ENCODE measurements at regions of chr9 and their contacts with region 1.

Region 1: DNA sequence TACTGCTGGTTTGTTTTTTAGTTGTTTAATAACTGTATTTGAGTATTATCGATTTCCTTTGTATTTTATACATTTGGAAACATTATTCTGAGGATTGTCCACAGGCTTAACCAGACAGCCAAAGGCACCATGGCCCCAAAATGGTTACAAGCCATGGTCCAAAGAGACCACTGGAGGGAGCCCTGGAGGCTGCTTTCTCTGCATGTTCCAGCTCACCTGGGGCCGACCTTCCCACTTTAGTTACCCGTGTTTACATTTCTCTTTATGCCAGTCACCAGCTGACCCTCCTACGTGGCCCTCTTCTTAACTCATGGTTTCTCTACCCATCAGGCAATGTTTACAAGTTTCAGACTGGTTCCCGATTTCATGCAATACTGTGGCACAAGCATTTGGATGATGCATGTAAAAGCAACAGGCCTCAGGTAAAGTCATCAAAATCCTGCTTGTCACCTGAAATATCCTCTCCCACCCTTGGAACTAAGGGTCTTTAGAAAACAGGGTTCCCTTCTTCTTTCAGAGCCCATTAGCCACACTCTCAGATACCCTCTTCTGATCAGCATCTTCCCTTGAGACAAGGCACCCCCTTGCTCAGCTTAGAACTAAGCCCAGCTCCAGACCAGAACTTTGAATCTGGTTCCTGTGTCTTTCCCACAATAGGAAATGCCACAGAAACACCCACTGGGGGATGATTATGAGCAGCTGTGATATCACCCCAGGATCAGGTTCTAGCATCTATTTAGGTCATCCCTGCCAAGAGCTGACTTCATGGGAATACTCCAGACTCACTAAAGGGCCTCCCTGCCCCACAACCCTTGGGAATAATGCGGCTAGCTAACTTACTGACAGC is 49.9 kb upstream of the GARNL3 start:
- DNase-seq: peak; percentile 40 to 78 (median 54)
- ATAC-seq: peak; percentile 92
- H3K4me3 ChIP-seq: no peak overlapping the region
- H3K4me3 Mint-ChIP-seq: no peak overlapping the region
- H3K27ac ChIP-seq: no peak overlapping the region
- H3K27ac Mint-ChIP-seq: no peak overlapping the region
- H3K4me1 ChIP-seq: no peaks in the 10 kb centered on the region
- H3K4me1 Mint-ChIP-seq: peaks cover 5% of the 10 kb centered on the region
- H3K27me3 ChIP-seq: no peaks in the 10 kb centered on the region
- H3K27me3 Mint-ChIP-seq: peaks cover 16% of the 10 kb centered on the region
- CTCF ChIP-seq: peak; percentile 83

Region 2: GRCh38 chr9:127049044-127049443 is 165.6 kb before region 1 on chr9:
- CTCF ChIA-PET with region 1: no interaction called
- POLR2A ChIA-PET with region 1: no interaction called
- intact Hi-C with region 1: no loop called
- DNase-seq: peak in 7 of 14 experiments; percentile 7 to 74 (median 44)
- ATAC-seq: peak; percentile 73
- H3K4me3 ChIP-seq: peak overlapping the region; percentile 0
- H3K4me3 Mint-ChIP-seq: peak overlapping the region; percentile 15
- H3K27ac ChIP-seq: no peak overlapping the region
- H3K27ac Mint-ChIP-seq: no peak overlapping the region
- H3K4me1 ChIP-seq: peaks cover 21% of the 10 kb centered on the region
- H3K4me1 Mint-ChIP-seq: peaks cover 24% of the 10 kb centered on the region
- H3K27me3 ChIP-seq: no peaks in the 10 kb centered on the region
- H3K27me3 Mint-ChIP-seq: no peaks in the 10 kb centered on the region
- CTCF ChIP-seq: peak; percentile 4

Region 3: GRCh38 chr9:127074561-127075548 is 139.8 kb before region 1 on chr9:
- CTCF ChIA-PET with region 1: no interaction called
- POLR2A ChIA-PET with region 1: no interaction called
- intact Hi-C with region 1: no loop called
- DNase-seq: no peak
- ATAC-seq: no peak
- H3K4me3 ChIP-seq: no peak overlapping the region
- H3K4me3 Mint-ChIP-seq: no peak overlapping the region
- H3K27ac ChIP-seq: no peak overlapping the region
- H3K27ac Mint-ChIP-seq: no peak overlapping the region
- H3K4me1 ChIP-seq: no peaks in the 10 kb centered on the region
- H3K4me1 Mint-ChIP-seq: no peaks in the 10 kb centered on the region
- H3K27me3 ChIP-seq: no peaks in the 10 kb centered on the region
- H3K27me3 Mint-ChIP-seq: no peaks in the 10 kb centered on the region
- CTCF ChIP-seq: no peak

Region 4: GRCh38 chr9:127244609-127245601 is 30.3 kb after region 1 on chr9:
- CTCF ChIA-PET with region 1: interaction called, 11 read pairs
- POLR2A ChIA-PET with region 1: no interaction called
- intact Hi-C with region 1: loop called in 1 of 2 experiments (anchors 5 kb)
- DNase-seq: peak; percentile 86 to 96 (median 94)
- ATAC-seq: peak; percentile 100
- H3K4me3 ChIP-seq: peak overlapping the region; percentile 56
- H3K4me3 Mint-ChIP-seq: peak overlapping the region; percentile 81
- H3K27ac ChIP-seq: no peak overlapping the region
- H3K27ac Mint-ChIP-seq: no peak overlapping the region
- H3K4me1 ChIP-seq: peaks cover 13% of the 10 kb centered on the region
- H3K4me1 Mint-ChIP-seq: peaks cover 12% of the 10 kb centered on the region
- H3K27me3 ChIP-seq: no peaks in the 10 kb centered on the region
- H3K27me3 Mint-ChIP-seq: peaks cover 20% of the 10 kb centered on the region
- CTCF ChIP-seq: no peak

Region 5: DNA sequence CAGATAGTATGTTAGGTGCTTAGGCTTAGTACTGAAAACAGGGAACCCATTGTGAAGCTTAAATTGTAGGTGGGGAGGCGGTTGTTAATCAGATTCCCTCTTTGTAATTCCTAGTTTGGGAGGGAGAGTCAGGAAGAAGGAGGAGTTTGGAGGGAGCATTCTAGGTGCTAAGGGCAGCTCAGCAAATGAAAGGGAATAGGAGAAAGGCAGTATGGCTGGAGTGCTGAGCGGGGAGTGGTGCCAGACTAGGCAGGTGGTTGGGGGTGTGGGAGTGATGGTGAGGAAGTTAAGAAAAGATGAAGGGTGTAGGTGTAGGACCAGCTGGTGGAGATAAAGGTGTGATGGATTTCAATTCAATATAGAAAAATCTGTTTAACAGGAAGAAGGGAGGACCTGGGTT is 38.8 kb after region 1 on chr9:
- CTCF ChIA-PET with region 1: interaction called, 4 read pairs
- POLR2A ChIA-PET with region 1: no interaction called
- intact Hi-C with region 1: loop called in 1 of 2 experiments (anchors 5 kb)
- DNase-seq: no peak
- ATAC-seq: no peak
- H3K4me3 ChIP-seq: no peak overlapping the region
- H3K4me3 Mint-ChIP-seq: no peak overlapping the region
- H3K27ac ChIP-seq: no peak overlapping the region
- H3K27ac Mint-ChIP-seq: no peak overlapping the region
- H3K4me1 ChIP-seq: no peaks in the 10 kb centered on the region
- H3K4me1 Mint-ChIP-seq: no peaks in the 10 kb centered on the region
- H3K27me3 ChIP-seq: no peaks in the 10 kb centered on the region
- H3K27me3 Mint-ChIP-seq: peaks cover 55% of the 10 kb centered on the region
- CTCF ChIP-seq: no peak

Region 6: DNA sequence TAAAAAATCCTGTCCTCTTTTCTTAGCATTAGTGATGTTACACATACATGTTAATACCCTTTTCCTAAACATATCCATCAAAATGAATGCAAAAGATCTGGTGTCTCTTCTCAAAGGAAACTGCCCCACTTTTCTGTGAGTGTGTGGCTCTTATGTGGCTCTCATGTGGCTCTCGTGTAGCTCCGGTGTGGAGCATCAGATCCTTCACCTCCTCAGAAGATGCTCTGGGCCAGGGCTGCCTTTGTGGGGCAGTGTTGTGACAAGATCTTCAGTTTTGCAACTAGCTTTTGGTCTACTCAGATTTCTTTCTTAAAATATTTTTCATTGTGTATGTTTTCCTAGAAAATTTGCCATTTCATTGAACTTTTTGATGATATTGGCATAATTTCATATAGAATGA is 69.3 kb after region 1 on chr9:
- CTCF ChIA-PET with region 1: no interaction called
- POLR2A ChIA-PET with region 1: no interaction called
- intact Hi-C with region 1: no loop called
- DNase-seq: peak in 8 of 14 experiments; percentile 1 to 49 (median 21)
- ATAC-seq: no peak
- H3K4me3 ChIP-seq: no peak overlapping the region
- H3K4me3 Mint-ChIP-seq: no peak overlapping the region
- H3K27ac ChIP-seq: no peak overlapping the region
- H3K27ac Mint-ChIP-seq: no peak overlapping the region
- H3K4me1 ChIP-seq: no peaks in the 10 kb centered on the region
- H3K4me1 Mint-ChIP-seq: no peaks in the 10 kb centered on the region
- H3K27me3 ChIP-seq: peaks cover 0 to 12% of the 10 kb centered on the region in 2 experiments
- H3K27me3 Mint-ChIP-seq: peaks cover 56% of the 10 kb centered on the region
- CTCF ChIP-seq: no peak

Region 7: DNA sequence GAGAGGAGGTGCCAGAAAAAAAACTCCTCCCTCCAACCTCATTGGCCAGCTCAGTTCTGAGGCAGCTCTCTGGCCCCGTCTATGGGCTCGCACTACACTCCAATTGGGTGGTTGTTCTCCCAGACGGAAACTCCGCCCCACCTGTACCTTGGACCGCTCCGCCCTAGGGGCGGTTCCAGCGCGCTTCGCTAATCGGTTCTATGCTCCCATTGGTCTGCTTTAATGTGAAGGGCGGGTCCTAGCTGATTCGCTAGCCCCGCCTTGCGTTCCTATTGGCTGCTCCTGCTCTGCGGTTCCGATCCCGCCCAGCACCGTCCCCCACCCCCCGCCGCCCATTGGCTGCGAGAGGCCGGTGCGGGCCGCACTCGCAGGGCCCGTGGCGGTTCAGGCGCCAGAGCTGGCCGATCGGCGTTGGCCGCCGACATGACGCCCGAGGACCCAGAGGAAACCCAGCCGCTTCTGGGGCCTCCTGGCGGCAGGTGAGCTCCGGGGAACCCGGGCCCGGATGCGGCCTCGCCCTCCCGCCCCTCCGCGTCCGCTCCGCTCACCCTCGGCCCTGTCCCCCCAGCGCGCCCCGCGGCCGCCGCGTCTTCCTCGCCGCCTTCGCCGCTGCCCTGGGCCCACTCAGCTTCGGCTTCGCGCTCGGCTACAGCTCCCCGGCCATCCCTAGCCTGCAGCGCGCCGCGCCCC is 182.3 kb after region 1 on chr9 and contains the start of gene SLC2A8:
- CTCF ChIA-PET with region 1: interaction called, 5 read pairs
- POLR2A ChIA-PET with region 1: no interaction called
- intact Hi-C with region 1: loop called in 1 of 2 experiments (anchors 5 kb)
- DNase-seq: peak; percentile 63 to 98 (median 76)
- ATAC-seq: peak; percentile 92
- H3K4me3 ChIP-seq: peak within 1 kb of the TSS; percentile 44
- H3K4me3 Mint-ChIP-seq: peak within 1 kb of the TSS; percentile 75
- H3K27ac ChIP-seq: no peak within 1 kb of the TSS
- H3K27ac Mint-ChIP-seq: no peak within 1 kb of the TSS
- H3K4me1 ChIP-seq: peaks cover 28% of the 10 kb centered on the region
- H3K4me1 Mint-ChIP-seq: peaks cover 21% of the 10 kb centered on the region
- H3K27me3 ChIP-seq: peaks cover 66 to 83% of the 10 kb centered on the region in 2 experiments
- H3K27me3 Mint-ChIP-seq: peaks cover 87% of the 10 kb centered on the region
- CTCF ChIP-seq: peak; percentile 18
- total RNA-seq, gene SLC2A8: 1.6 to 1.8 TPM

Measured in CD4-positive, alpha-beta T cell (primary cell).